Heart left ventricle (tissue), 16 donors: ENCODE measurements at regions of chr2 and their contacts with region 1.

Region 1: DNA sequence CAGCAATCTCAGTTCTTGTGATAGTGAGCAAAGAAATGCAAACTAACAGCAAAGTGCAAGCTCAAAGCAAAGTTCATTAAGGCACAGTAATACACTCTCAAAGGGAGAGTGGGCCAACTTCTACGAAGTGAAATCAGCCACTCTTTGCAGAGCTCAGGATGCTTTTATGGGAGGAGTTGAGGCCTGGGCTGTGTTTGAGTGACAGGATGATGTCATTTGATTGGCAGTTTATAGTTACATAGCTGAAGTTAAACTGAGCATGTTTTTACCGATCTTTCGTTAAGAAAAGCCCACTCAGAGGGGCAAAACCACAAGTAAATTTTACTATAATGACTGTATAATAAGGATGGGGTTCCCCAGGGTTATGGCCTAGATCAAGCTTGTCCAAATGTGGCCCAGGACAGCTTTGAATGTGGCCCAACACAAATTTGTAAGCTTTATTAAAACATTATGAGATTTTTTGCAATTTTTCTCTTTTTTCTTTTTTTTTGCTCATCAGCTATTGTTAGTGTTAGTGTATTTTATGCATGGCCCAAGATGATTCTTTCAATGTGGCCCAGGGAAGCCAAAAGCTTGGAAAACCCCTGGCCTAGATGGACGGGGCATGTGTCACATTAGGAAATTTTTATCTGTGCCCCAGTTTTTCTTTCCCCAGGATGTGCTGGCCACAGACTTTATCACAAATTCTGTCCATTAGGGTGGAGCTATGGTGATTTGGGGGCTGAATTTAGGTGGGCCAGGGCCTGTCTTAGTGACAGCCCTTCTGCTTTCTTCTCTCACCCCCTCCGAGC is 8.3 kb upstream of the DNAH7 start:
- DNase-seq: no peak
- ATAC-seq: no peak
- H3K4me3 ChIP-seq: no peak overlapping the region
- H3K27ac ChIP-seq: no peak overlapping the region
- H3K4me1 ChIP-seq: peaks cover 0 to 18% (median 7%) of the 10 kb centered on the region in 12 donors
- H3K27me3 ChIP-seq: no peaks in the 10 kb centered on the region
- CTCF ChIP-seq: no peak
- POLR2A ChIP-seq: no peak

Region 2: DNA sequence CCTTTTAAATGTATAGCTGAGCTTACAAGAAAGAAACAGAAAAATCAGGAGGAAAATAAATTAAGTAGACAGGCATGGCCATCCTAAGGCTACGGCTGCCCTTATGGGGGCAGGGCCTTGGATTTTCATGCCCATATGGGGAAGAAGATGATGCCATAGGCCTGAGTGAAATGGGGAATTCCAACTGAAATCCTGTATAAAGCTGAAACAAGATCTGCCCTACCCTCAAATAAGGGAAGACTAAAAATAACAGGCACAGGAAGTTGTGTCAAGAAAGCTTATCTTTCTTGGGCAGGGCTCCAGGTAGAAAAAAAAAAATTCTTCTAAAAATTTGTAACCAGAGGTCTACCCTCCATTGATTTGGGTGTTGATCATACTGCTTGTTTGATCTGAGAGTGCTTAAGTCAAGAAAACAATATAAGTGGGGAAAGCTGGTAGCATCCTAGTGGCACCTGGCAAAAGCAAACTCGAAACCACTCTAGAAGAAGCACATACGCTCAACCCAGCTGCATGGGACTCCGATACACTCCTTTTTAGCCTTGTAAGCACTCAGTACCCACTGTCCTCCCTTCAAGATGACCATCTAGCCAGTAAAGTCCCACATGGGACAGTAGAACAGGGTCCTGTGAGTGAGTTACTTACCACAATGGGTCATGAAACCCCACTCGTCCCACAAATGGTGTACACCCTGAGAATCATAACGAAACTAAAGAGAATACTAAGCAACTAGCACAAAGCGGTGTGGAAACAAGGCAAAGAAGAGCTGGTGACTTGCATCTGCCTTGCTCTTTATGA is 30.7 kb before region 1 on chr2:
- intact Hi-C with region 1: no loop called
- DNase-seq: no peak
- ATAC-seq: no peak
- H3K4me3 ChIP-seq: no peak overlapping the region
- H3K27ac ChIP-seq: no peak overlapping the region
- H3K4me1 ChIP-seq: no peaks in the 10 kb centered on the region
- H3K27me3 ChIP-seq: no peaks in the 10 kb centered on the region
- CTCF ChIP-seq: no peak
- POLR2A ChIP-seq: no peak

Region 3: GRCh38 chr2:196171248-196171871 is 94.4 kb after region 1 on chr2 and contains the start of gene STK17B:
- intact Hi-C with region 1: loop called in 2 of 10 experiments (anchors 2 to 5 kb)
- DNase-seq: peak; percentile 95 to 98 (median 95)
- ATAC-seq: peak; percentile 96 to 99 (median 98)
- H3K4me3 ChIP-seq: peak within 1 kb of the TSS; percentile 64 to 98 (median 90)
- H3K27ac ChIP-seq: peak within 1 kb of the TSS; percentile 31 to 97 (median 80)
- H3K4me1 ChIP-seq: peaks cover 0 to 47% (median 15%) of the 10 kb centered on the region in 12 donors
- H3K27me3 ChIP-seq: no peaks in the 10 kb centered on the region
- CTCF ChIP-seq: peak in 3 of 12 donors; percentile 5 to 28 (median 14)
- POLR2A ChIP-seq: peak; percentile 17 to 85
- total RNA-seq, gene STK17B: 3.3 to 24.4 (median 5.3) TPM

Region 4: GRCh38 chr2:196268538-196269338 is 191.8 kb after region 1 on chr2:
- intact Hi-C with region 1: loop called in 5 of 10 experiments (anchors 2 to 10 kb)
- DNase-seq: no peak
- ATAC-seq: peak; percentile 59 to 75 (median 66)
- H3K4me3 ChIP-seq: peak overlapping the region in 1 of 12 donors; percentile 27
- H3K27ac ChIP-seq: peak overlapping the region in 10 of 12 donors; percentile 21 to 91 (median 38)
- H3K4me1 ChIP-seq: peaks cover 0 to 53% (median 27%) of the 10 kb centered on the region in 12 donors
- H3K27me3 ChIP-seq: no peaks in the 10 kb centered on the region
- CTCF ChIP-seq: no peak
- POLR2A ChIP-seq: no peak

Region 5: GRCh38 chr2:196291873-196292800 is 215.2 kb after region 1 on chr2:
- intact Hi-C with region 1: loop called in 2 of 10 experiments (anchors 5 to 10 kb)
- DNase-seq: peak in 1 of 5 donors; percentile 53
- ATAC-seq: peak in 3 of 4 donors; percentile 45 to 76 (median 50)
- H3K4me3 ChIP-seq: no peak overlapping the region
- H3K27ac ChIP-seq: peak overlapping the region in 7 of 12 donors; percentile 31 to 79 (median 59)
- H3K4me1 ChIP-seq: peaks cover 0 to 58% (median 18%) of the 10 kb centered on the region in 12 donors
- H3K27me3 ChIP-seq: no peaks in the 10 kb centered on the region
- CTCF ChIP-seq: no peak
- POLR2A ChIP-seq: no peak

Region 6: DNA sequence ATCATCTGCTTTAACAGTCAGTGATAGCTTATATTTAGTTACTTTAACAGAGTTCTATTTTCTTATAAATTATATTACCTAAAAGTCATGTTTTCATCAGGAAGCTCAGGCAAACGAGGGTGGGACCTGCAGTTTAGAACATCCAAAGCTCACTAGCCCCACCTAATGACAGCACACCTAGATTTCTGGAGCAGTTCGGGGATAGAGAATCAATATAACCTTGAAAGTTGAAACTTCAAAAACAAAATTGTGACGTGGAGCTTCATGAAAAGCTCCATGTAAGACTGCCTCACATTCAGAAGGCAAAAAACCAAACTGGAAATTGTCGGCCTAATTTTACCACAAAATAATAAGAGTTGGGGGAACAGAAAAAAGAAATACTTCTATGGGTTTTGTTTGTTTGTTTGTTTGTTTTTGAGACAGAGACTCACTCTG is 376.7 kb after region 1 on chr2:
- intact Hi-C with region 1: loop called in 9 of 10 experiments (anchors 2 to 10 kb)
- DNase-seq: peak in 3 of 5 donors; percentile 33 to 43 (median 42)
- ATAC-seq: peak; percentile 51 to 69 (median 58)
- H3K4me3 ChIP-seq: no peak overlapping the region
- H3K27ac ChIP-seq: peak overlapping the region in 1 of 12 donors; percentile 23
- H3K4me1 ChIP-seq: peaks cover 0 to 15% (median 0%) of the 10 kb centered on the region in 12 donors
- H3K27me3 ChIP-seq: peaks cover 0 to 8% (median 0%) of the 10 kb centered on the region in 9 donors
- CTCF ChIP-seq: peak; percentile 37 to 81 (median 68)
- POLR2A ChIP-seq: no peak

Region 7: GRCh38 chr2:196767101-196767500 is 690.1 kb after region 1 on chr2:
- intact Hi-C with region 1: loop called in 3 of 10 experiments (anchors 5 to 10 kb)
- DNase-seq: no peak
- ATAC-seq: no peak
- H3K4me3 ChIP-seq: no peak overlapping the region
- H3K27ac ChIP-seq: no peak overlapping the region
- H3K4me1 ChIP-seq: no peaks in the 10 kb centered on the region
- H3K27me3 ChIP-seq: no peaks in the 10 kb centered on the region
- CTCF ChIP-seq: no peak
- POLR2A ChIP-seq: no peak